Activated CD4-positive, alpha-beta memory T cell treated with anti-CD3 and anti-CD28 coated beads for 36 hours (primary cell): ENCODE measurements at regions of chr16 and their contacts with region 1.

Region 1: DNA sequence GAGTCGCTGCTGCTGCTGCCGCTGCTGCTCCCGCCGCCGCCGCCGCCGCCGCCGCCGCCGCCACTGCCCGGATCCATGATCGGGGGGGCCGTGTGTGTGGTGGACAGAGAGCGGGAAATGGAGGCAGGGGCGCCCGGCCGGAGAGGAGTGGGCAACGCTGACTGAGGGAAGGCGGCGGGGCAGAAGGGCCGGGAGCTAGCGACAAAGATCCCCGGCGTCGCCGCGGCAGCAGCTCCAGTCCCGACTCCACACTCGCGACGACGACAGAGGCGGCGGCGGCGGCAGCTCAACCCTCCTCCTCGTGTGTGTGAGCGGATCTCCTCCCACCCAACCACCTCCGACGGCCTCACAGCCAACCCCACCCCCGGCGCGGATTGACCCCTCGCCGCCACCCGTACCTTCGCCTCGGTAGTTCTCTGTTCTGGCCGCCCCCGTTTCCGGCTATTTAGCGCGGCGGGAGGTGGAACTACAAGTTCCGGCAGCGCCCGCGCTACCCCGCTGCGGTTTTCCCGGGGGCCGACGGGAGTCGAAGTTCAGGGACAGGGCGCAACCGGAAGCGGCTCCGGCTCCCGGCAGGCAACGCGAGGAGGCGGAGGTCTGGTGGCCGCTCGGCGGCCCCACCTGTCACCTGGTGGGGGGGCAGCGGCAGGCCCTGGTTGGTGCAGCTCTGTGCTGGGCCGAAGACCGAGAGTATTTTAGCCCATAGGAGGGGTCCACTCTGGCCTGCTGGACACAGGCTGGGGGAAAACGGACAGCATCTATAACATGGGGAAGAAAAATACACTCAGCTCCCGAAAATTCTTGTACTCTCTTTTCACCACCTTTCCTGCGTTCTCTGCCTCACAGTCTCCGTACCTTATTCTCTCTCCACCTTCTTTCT is at the start of gene GSPT1:
- DNase-seq: peak; percentile 100
- H3K4me3 Mint-ChIP-seq: peak within 1 kb of the TSS; percentile 95
- H3K27ac Mint-ChIP-seq: peak within 1 kb of the TSS; percentile 92
- H3K4me1 Mint-ChIP-seq: peaks cover 34% of the 10 kb centered on the region
- H3K27me3 Mint-ChIP-seq: peaks cover 4% of the 10 kb centered on the region
- total RNA-seq, gene GSPT1: 185 to 190 TPM

Region 2: GRCh38 chr16:10944249-10945064 is 971.4 kb before region 1 on chr16 and contains the start of gene CLEC16A:
- CTCF ChIA-PET with region 1: no interaction called
- POLR2A ChIA-PET with region 1: no interaction called
- intact Hi-C with region 1: loop called (anchors 5 kb)
- DNase-seq: peak; percentile 97
- H3K4me3 Mint-ChIP-seq: peak within 1 kb of the TSS; percentile 85
- H3K27ac Mint-ChIP-seq: peak within 1 kb of the TSS; percentile 57
- H3K4me1 Mint-ChIP-seq: peaks cover 60% of the 10 kb centered on the region
- H3K27me3 Mint-ChIP-seq: no peaks in the 10 kb centered on the region
- total RNA-seq, gene CLEC16A: 25.5 to 26.7 TPM

Region 3: DNA sequence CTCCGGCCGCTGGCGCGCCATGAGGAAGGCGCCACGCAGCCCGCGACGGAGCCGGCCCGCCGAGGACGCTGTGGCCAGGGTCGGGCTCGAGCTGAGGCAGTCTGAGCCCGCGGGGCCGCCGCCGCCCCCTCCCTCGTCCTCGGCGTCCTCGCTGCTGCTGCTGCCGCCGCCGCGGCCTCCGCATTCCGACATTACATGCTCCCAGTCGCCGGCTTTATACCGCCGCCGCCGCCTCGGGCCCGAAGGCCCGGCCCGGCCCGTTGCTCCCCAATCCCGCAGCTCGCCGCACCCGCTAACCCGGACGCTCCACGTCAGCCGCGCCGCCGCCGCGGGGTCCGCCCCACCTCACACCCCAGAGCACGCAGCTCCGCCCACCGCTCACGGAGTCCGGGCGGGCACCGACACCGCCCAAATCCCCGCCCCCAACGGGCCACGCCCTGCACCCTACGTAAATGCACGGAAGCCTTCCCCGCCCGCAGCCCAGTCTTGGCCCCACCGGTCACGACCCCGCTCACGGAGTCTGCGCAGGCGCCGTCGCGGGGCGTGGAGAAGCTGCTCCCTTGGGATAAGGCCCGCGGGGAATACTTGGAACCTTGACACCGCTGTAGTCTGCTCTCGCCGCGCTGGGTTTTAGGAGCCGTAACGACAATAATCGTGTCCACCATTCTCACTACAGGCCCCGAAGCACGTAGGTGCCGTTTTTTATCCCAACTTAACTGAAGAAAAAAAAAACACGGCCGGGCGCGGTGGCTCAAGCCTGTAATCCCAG is 173.2 kb before region 1 on chr16 and contains the start of gene TXNDC11:
- CTCF ChIA-PET with region 1: no interaction called
- POLR2A ChIA-PET with region 1: interaction called, 4 read pairs
- intact Hi-C with region 1: loop called (anchors 1 kb)
- DNase-seq: peak; percentile 99
- H3K4me3 Mint-ChIP-seq: peak within 1 kb of the TSS; percentile 89
- H3K27ac Mint-ChIP-seq: peak within 1 kb of the TSS; percentile 94
- H3K4me1 Mint-ChIP-seq: peaks cover 47% of the 10 kb centered on the region
- H3K27me3 Mint-ChIP-seq: no peaks in the 10 kb centered on the region
- total RNA-seq, gene TXNDC11: 28.4 to 29.9 TPM

Region 4: GRCh38 chr16:11797166-11797956 is 118.5 kb before region 1 on chr16 and contains the start of gene ZC3H7A:
- CTCF ChIA-PET with region 1: no interaction called
- POLR2A ChIA-PET with region 1: interaction called, 3 read pairs
- intact Hi-C with region 1: loop called (anchors 5 kb)
- DNase-seq: peak; percentile 96
- H3K4me3 Mint-ChIP-seq: peak within 1 kb of the TSS; percentile 87
- H3K27ac Mint-ChIP-seq: peak within 1 kb of the TSS; percentile 91
- H3K4me1 Mint-ChIP-seq: peaks cover 64% of the 10 kb centered on the region
- H3K27me3 Mint-ChIP-seq: no peaks in the 10 kb centered on the region
- total RNA-seq, gene ZC3H7A: 65.1 to 75.5 TPM

Region 5: GRCh38 chr16:11851294-11852091 is 64.4 kb before region 1 on chr16 and contains the start of gene RSL1D1:
- CTCF ChIA-PET with region 1: no interaction called
- POLR2A ChIA-PET with region 1: interaction called, 6 read pairs
- intact Hi-C with region 1: loop called (anchors 1 kb)
- DNase-seq: peak; percentile 96
- H3K4me3 Mint-ChIP-seq: peak within 1 kb of the TSS; percentile 94
- H3K27ac Mint-ChIP-seq: peak within 1 kb of the TSS; percentile 89
- H3K4me1 Mint-ChIP-seq: peaks cover 52% of the 10 kb centered on the region
- H3K27me3 Mint-ChIP-seq: no peaks in the 10 kb centered on the region
- total RNA-seq, gene RSL1D1: 287 to 296 TPM

Region 6: GRCh38 chr16:11876306-11876705 is 39.6 kb before region 1 on chr16:
- CTCF ChIA-PET with region 1: no interaction called
- POLR2A ChIA-PET with region 1: no interaction called
- intact Hi-C with region 1: no loop called
- DNase-seq: no peak
- H3K4me3 Mint-ChIP-seq: no peak overlapping the region
- H3K27ac Mint-ChIP-seq: no peak overlapping the region
- H3K4me1 Mint-ChIP-seq: peaks cover 2% of the 10 kb centered on the region
- H3K27me3 Mint-ChIP-seq: no peaks in the 10 kb centered on the region

Region 7: DNA sequence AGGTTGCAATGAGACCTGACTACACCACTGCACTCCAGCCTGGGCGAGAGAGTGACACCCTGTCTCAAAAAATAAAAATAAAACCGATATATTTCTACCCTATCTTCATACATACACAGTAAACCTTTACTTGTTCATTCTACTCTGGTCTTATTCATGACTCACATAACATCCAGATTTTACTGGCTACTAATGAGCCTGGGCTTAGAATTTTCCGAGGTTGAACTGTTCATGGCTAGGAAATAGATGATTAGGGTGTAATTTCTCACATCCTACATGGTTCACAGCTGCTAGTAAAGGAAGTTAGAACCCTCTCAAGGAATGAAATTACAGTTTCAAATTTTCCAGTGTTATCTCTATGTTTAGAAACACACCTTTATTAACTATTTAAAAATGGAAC is 14.8 kb before region 1 on chr16:
- CTCF ChIA-PET with region 1: interaction called, 6 read pairs
- POLR2A ChIA-PET with region 1: interaction called, 5 read pairs
- intact Hi-C with region 1: loop called (anchors 2 kb)
- DNase-seq: no peak
- H3K4me3 Mint-ChIP-seq: no peak overlapping the region
- H3K27ac Mint-ChIP-seq: peak overlapping the region; percentile 77
- H3K4me1 Mint-ChIP-seq: peaks cover 73% of the 10 kb centered on the region
- H3K27me3 Mint-ChIP-seq: no peaks in the 10 kb centered on the region

Region 8: GRCh38 chr16:11977376-11978041 is 61.6 kb after region 1 on chr16:
- CTCF ChIA-PET with region 1: interaction called, 9 read pairs
- POLR2A ChIA-PET with region 1: interaction called, 3 read pairs
- intact Hi-C with region 1: loop called (anchors 1 kb)
- DNase-seq: no peak
- H3K4me3 Mint-ChIP-seq: peak overlapping the region; percentile 95
- H3K27ac Mint-ChIP-seq: peak overlapping the region; percentile 58
- H3K4me1 Mint-ChIP-seq: peaks cover 33% of the 10 kb centered on the region
- H3K27me3 Mint-ChIP-seq: no peaks in the 10 kb centered on the region